ENCODE measurements at regions of chr3 and their contacts with region 1.

Region 1: GRCh38 chr3:16496408-16497222 is 16.9 kb downstream of the RFTN1 start:
- DNase-seq: peak in 1 of 2 donors; percentile 39
- ATAC-seq: peak; percentile 9 to 56 (median 28)
- H3K4me3 ChIP-seq: no peak overlapping the region
- H3K4me3 Mint-ChIP-seq: peak overlapping the region; percentile 80
- H3K27ac ChIP-seq: peak overlapping the region; percentile 26
- H3K27ac Mint-ChIP-seq: peak overlapping the region; percentile 84
- H3K4me1 ChIP-seq: peaks cover 51% of the 10 kb centered on the region
- H3K4me1 Mint-ChIP-seq: peaks cover 67 to 70% of the 10 kb centered on the region in 2 donors
- H3K27me3 ChIP-seq: no peaks in the 10 kb centered on the region
- H3K27me3 Mint-ChIP-seq: no peaks in the 10 kb centered on the region
- CTCF ChIP-seq: no peak

Region 2: DNA sequence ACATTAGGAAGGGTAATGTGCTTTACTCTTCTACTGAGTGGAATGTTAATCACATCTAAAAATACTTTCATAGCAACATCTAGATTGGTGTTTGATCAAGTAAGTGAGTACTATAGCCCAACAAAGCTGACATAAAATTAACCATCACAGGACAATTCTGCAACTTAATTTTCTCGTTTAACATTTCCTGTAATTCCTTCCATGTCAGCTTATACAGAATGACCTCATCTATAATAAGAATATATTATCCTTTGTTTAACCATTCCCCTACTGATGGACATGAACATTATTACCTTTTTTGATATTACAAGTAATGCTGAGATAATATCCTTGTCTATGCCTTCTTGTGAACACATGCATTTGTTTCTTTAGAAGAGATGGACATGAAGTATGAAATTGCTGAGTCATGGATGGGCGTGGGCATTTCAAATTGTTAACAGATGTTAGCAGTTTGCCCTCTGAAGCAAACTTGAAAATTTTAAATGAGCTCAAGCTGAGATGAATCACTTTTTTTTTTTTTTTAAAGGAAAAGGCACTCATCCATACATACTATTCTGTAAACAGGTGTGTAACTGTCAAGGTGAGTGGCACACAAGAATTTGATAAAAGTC is 146.5 kb before region 1 on chr3:
- intact Hi-C with region 1: no loop called
- DNase-seq: no peak
- ATAC-seq: no peak
- H3K4me3 ChIP-seq: no peak overlapping the region
- H3K4me3 Mint-ChIP-seq: no peak overlapping the region
- H3K27ac ChIP-seq: no peak overlapping the region
- H3K27ac Mint-ChIP-seq: peak overlapping the region in 1 of 2 donors; percentile 54
- H3K4me1 ChIP-seq: no peaks in the 10 kb centered on the region
- H3K4me1 Mint-ChIP-seq: peaks cover 36 to 39% of the 10 kb centered on the region in 2 donors
- H3K27me3 ChIP-seq: no peaks in the 10 kb centered on the region
- H3K27me3 Mint-ChIP-seq: no peaks in the 10 kb centered on the region
- CTCF ChIP-seq: no peak

Region 3: GRCh38 chr3:16462679-16463078 is 33.9 kb before region 1 on chr3:
- intact Hi-C with region 1: loop called (anchors 5 kb)
- DNase-seq: peak in 1 of 2 donors; percentile 49
- ATAC-seq: peak; percentile 63 to 78 (median 77)
- H3K4me3 ChIP-seq: no peak overlapping the region
- H3K4me3 Mint-ChIP-seq: peak overlapping the region; percentile 56
- H3K27ac ChIP-seq: peak overlapping the region; percentile 59
- H3K27ac Mint-ChIP-seq: peak overlapping the region; percentile 81 to 85
- H3K4me1 ChIP-seq: peaks cover 23% of the 10 kb centered on the region
- H3K4me1 Mint-ChIP-seq: peaks cover 44 to 50% of the 10 kb centered on the region in 2 donors
- H3K27me3 ChIP-seq: no peaks in the 10 kb centered on the region
- H3K27me3 Mint-ChIP-seq: no peaks in the 10 kb centered on the region
- CTCF ChIP-seq: no peak

Region 4: DNA sequence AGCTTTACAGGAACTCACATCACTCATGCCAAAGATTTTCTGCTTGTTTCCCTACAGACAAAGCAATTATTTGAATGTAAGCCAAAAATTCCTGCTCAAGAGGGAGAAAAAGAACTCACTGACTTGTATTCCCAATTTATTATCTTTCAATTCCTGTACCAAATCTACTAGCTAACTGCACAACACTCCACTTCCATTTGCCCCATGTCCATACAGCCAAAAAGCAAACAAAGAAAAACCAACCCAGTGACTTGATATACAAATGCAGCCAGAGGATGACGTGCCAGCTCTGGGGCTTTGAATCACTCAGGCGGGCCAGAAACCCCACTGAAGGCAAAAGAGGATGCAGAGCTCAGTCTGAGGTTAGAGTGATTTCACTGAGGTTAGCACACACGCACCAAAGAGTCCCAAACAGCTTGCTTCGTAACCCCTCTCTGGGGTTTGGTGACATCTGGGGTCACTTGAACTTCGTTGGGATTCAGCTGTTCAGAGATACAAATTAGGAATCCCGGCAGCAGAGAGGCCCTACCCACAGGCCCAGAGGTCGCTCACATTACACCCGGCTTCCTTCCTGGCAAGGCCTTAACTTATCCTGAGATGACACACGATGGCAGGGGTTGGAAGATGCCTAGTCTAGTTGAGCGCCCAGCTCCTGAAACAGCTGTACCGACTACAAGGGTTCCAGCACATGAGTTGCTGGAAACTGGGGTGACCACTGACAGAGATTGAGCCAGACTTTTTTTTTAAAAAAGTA is 15.2 kb after region 1 on chr3:
- intact Hi-C with region 1: loop called (anchors 2 kb)
- DNase-seq: peak; percentile 66 to 94
- ATAC-seq: peak; percentile 50 to 76 (median 74)
- H3K4me3 ChIP-seq: peak overlapping the region; percentile 70
- H3K4me3 Mint-ChIP-seq: peak overlapping the region; percentile 97
- H3K27ac ChIP-seq: peak overlapping the region; percentile 92
- H3K27ac Mint-ChIP-seq: peak overlapping the region; percentile 91 to 97
- H3K4me1 ChIP-seq: peaks cover 74% of the 10 kb centered on the region
- H3K4me1 Mint-ChIP-seq: peaks cover 80 to 88% of the 10 kb centered on the region in 2 donors
- H3K27me3 ChIP-seq: no peaks in the 10 kb centered on the region
- H3K27me3 Mint-ChIP-seq: no peaks in the 10 kb centered on the region
- CTCF ChIP-seq: no peak

Region 5: DNA sequence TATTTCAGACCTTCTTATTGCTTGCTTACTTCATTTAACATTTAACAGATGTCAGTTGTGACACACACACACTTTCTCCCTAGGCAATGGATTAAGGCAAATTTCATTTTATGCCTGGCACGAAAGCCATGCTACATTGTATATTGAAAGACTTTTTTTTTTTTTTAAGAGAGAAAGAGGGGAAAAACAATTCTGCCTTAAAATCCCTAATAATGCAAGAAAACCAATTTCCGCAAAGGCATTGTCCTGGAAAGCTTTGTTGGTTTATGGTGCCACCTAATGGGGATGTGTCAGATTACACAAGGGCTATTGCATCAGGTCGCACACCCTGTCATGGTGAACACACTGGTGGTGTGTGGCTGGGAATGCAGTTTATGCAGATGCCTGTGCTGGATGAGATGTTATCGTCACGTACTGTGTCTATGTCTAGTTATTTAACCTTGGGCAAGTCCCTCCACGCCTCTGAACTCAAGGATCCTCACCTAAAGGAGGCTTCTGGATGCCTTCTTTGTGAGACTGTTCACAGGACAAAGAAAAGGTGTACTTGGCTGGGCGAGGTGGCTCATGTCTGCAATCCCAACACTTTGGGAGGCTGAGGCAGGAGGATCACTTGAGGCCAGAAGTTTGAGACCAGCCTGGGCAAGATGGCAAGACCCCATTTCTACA is 54.2 kb after region 1 on chr3:
- intact Hi-C with region 1: loop called (anchors 2 kb)
- DNase-seq: peak; percentile 56 to 91
- ATAC-seq: peak; percentile 86 to 90 (median 88)
- H3K4me3 ChIP-seq: no peak overlapping the region
- H3K4me3 Mint-ChIP-seq: peak overlapping the region; percentile 40
- H3K27ac ChIP-seq: no peak overlapping the region
- H3K27ac Mint-ChIP-seq: peak overlapping the region; percentile 31 to 69
- H3K4me1 ChIP-seq: peaks cover 17% of the 10 kb centered on the region
- H3K4me1 Mint-ChIP-seq: peaks cover 34 to 40% of the 10 kb centered on the region in 2 donors
- H3K27me3 ChIP-seq: no peaks in the 10 kb centered on the region
- H3K27me3 Mint-ChIP-seq: peaks cover 0 to 9% of the 10 kb centered on the region in 2 donors
- CTCF ChIP-seq: peak; percentile 93

Measured in natural killer cell (primary cell).